Panc1 (cell line): ENCODE measurements at regions of chr6 and their contacts with region 1.

Region 1: GRCh38 chr6:18595774-18596530 is 208.8 kb downstream of the RNF144B start:
- DNase-seq: peak; percentile 69
- ATAC-seq: peak; percentile 93
- H3K4me3 ChIP-seq: no peak overlapping the region
- H3K27ac ChIP-seq: no peak overlapping the region
- H3K4me1 ChIP-seq: no peaks in the 10 kb centered on the region
- H3K27me3 ChIP-seq: no peaks in the 10 kb centered on the region; the same call in 1 of the 2 replicates
- CTCF ChIP-seq: peak; percentile 93

Region 2: GRCh38 chr6:18147160-18147559 is 448.8 kb before region 1 on chr6:
- CTCF ChIA-PET with region 1: no interaction called
- POLR2A ChIA-PET with region 1: no interaction called
- in situ Hi-C with region 1: no loop called
- intact Hi-C with region 1: no loop called
- DNase-seq: no peak
- ATAC-seq: peak; percentile 58; the same call in 1 of the 2 replicates
- H3K4me3 ChIP-seq: no peak overlapping the region
- H3K27ac ChIP-seq: no peak overlapping the region
- H3K4me1 ChIP-seq: no peaks in the 10 kb centered on the region
- H3K27me3 ChIP-seq: no peaks in the 10 kb centered on the region
- CTCF ChIP-seq: no peak

Region 3: DNA sequence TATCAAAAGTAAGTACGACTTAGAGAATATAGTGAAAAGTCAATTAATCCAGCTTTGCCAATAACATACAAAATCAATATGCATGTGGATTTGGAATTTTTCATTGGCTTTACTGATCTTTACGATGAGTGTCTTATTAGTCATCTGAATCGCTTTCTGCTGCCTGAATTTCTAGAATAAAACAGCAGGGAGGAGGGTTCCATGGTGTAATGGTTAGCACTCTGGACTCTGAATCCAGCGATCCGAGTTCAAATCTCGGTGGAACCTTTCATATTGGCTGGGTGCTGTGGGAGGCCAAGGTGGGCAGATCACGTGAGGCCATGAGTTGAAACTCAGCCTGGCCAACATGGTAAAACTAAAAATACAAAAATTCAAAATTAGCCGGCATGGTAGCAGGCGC is 240.0 kb after region 1 on chr6:
- CTCF ChIA-PET with region 1: no interaction called
- POLR2A ChIA-PET with region 1: no interaction called
- in situ Hi-C with region 1: no loop called
- intact Hi-C with region 1: loop called (anchors 10 kb)
- DNase-seq: no peak
- ATAC-seq: no peak
- H3K4me3 ChIP-seq: no peak overlapping the region
- H3K27ac ChIP-seq: no peak overlapping the region
- H3K4me1 ChIP-seq: no peaks in the 10 kb centered on the region
- H3K27me3 ChIP-seq: no peaks in the 10 kb centered on the region
- CTCF ChIP-seq: no peak

Region 4: DNA sequence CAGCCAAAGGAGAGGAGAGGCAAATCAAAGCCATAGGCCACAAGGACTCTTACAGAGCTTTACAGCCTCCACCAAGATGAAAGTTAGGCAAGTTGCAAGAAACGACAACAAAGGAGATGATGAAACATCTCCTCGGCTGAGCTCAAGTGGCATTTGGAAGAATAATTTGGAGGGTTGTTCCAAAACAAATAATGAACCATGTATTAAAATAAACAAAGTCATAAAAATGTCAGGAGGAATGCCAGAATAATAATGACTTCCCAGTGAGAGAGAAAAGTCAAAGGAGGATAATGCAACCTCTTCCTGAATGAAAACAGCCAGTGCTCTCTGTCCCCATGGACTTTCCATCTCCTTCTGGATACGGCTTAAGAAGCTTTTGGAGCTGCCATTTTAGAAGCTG is 869.8 kb after region 1 on chr6:
- CTCF ChIA-PET with region 1: interaction called, 10 read pairs
- POLR2A ChIA-PET with region 1: no interaction called
- in situ Hi-C with region 1: no loop called
- intact Hi-C with region 1: no loop called
- DNase-seq: peak; percentile 68
- ATAC-seq: peak; percentile 75
- H3K4me3 ChIP-seq: peak overlapping the region in 1 of 2 experiments; percentile 36; a peak in 2 of 4 replicates
- H3K27ac ChIP-seq: peak overlapping the region; percentile 75; the same call in 1 of the 2 replicates
- H3K4me1 ChIP-seq: peaks cover 14% of the 10 kb centered on the region
- H3K27me3 ChIP-seq: no peaks in the 10 kb centered on the region
- CTCF ChIP-seq: no peak

Region 5: DNA sequence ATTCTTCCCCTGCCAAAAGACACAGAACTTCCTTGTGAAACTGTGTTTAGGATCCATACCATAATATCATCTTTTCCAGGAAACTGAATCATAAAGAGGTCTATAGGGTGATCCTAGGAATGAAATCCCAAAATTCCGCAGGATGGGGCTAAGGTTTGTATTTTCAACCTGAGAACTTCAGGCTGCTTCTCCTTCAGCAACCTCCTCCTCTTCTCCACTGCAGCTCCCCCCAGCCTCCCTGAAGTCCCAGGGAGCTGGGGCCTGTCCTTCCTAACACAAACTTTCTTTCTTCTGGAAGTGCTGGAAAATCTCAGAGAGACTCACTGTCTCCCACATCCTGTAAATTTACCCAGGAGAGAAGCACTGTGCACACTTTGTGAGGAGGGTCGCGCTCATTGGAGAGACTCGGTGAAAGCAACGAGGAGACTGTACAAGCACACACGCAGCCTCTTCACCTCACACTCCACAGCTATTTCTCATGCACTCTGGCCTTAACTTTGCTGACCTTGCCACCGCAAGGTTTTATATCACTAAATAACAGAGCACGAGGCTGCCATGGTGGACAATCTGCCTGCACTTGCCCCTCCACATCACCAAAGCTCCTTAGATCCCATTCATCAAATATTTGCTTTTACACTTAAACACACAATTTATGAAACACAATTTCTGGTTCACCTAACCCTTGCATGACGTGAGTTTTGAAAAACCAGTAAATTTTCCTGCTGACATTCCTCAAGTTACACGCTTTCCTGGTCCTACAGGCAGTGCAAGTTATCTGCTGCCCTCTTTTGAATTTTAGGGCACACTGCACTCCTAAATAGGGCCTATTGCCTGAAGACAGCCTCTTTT is 1255.5 kb after region 1 on chr6:
- CTCF ChIA-PET with region 1: no interaction called
- POLR2A ChIA-PET with region 1: no interaction called
- in situ Hi-C with region 1: no loop called
- intact Hi-C with region 1: loop called (anchors 10 kb)
- DNase-seq: peak; percentile 24
- ATAC-seq: peak; percentile 97
- H3K4me3 ChIP-seq: peak overlapping the region in 1 of 2 experiments; percentile 6; a peak in 1 of 4 replicates
- H3K27ac ChIP-seq: peak overlapping the region; percentile 60
- H3K4me1 ChIP-seq: peaks cover 18% of the 10 kb centered on the region
- H3K27me3 ChIP-seq: no peaks in the 10 kb centered on the region
- CTCF ChIP-seq: peak; percentile 93

Region 6: DNA sequence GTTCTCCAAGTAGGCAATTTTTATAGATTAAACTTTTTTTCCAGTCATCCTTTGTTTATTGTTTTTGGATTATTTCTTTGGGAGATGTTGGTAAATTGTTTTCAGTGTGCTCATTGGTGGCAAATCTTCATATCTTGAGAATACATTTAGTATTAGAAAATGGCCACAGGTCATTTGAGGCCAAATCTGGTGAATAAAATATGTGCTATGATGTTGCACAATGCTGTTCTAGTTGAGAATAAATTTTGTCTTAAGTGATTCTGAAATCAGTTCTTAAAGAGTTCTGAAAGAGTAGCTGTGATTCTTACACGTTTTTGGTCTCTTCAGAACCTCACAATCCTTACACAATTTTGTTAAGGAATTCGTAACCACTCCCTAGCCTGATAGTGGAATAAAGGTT is 1958.4 kb after region 1 on chr6:
- CTCF ChIA-PET with region 1: interaction called, 14 read pairs
- POLR2A ChIA-PET with region 1: no interaction called
- in situ Hi-C with region 1: no loop called
- intact Hi-C with region 1: no loop called
- DNase-seq: no peak
- ATAC-seq: no peak
- H3K4me3 ChIP-seq: no peak overlapping the region
- H3K27ac ChIP-seq: no peak overlapping the region
- H3K4me1 ChIP-seq: no peaks in the 10 kb centered on the region
- H3K27me3 ChIP-seq: no peaks in the 10 kb centered on the region
- CTCF ChIP-seq: no peak